ENCODE measurements at regions of chr1 and their contacts with region 1.

Region 1: GRCh38 chr1:107782217-107782845 is 182.6 kb downstream of the VAV3 start:
- DNase-seq: peak in 1 of 2 donors; percentile 23
- H3K4me3 ChIP-seq: no peak overlapping the region
- H3K27ac ChIP-seq: peak overlapping the region in 2 of 3 donors; percentile 10 to 47
- H3K4me1 ChIP-seq: peaks cover 11 to 25% of the 10 kb centered on the region in 2 donors
- H3K27me3 ChIP-seq: no peaks in the 10 kb centered on the region
- CTCF ChIP-seq: peak; percentile 43 to 86 (median 72)
- POLR2A ChIP-seq: no peak

Region 2: DNA sequence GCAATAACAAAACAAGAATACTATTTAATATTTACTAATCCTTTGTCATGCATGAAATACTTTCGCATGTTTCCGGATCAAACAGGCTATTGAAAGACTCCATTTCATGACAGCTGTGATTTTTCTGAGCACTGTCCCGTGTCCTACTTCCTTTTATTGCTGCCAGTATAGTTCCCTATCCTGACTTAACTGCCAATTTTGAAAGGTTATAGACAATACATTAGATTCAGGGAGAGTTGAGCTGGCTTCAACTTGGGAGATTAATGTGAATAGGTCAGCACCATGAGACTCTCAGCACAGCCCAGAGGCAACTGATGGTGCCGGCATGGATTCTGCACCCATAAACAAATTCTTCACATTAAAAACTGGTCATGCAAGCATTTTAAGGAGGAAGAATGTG is 43.1 kb before region 1 on chr1:
- intact Hi-C with region 1: no loop called
- DNase-seq: no peak
- H3K4me3 ChIP-seq: no peak overlapping the region
- H3K27ac ChIP-seq: no peak overlapping the region
- H3K4me1 ChIP-seq: no peaks in the 10 kb centered on the region
- H3K27me3 ChIP-seq: no peaks in the 10 kb centered on the region
- CTCF ChIP-seq: no peak
- POLR2A ChIP-seq: no peak

Region 3: DNA sequence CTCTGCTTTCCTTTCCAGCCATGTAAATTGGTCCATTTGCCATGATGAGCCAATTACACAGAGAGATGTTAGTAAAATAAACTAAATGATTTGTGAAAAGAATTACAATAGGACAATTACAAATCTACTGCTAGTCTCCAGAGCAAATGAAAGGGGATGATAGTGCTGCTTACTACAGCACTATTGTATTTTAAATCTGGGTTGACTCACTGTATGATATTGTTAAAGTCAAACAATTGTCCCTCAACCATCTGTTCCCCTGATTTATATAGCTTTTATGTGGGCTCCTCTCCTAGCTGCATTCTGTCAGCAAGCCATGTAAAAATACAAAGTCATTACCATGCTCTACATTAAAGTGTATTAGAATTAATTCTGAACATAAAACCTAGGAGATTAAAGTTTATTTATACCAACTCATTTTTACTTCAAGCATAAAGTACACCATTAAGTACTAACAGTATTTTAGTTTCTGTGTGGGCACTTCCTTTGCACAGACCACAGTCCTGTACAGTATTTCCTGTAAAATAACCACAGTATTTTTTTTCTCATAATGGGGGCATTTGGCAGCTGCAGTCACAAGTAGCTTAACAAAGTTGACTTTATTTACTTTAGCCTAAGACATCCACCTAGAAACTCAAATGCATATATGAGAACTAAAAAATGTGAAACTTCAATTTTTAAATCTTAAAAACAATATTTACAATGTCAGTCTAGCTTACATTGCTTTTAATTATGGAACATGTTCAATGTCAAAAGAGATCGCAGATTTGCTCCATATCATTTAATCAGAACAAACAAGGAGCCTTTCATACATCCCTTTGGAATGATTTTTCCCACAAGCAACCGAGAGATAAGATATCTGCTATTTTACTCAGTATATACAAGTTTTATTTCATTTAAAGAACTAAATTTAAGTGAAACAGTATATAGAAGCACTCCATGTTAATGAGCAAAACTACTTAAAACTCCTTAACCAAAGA is 47.0 kb after region 1 on chr1:
- intact Hi-C with region 1: loop called (anchors 10 kb)
- DNase-seq: no peak
- H3K4me3 ChIP-seq: no peak overlapping the region
- H3K27ac ChIP-seq: peak overlapping the region in 1 of 3 donors; percentile 15
- H3K4me1 ChIP-seq: peaks cover 14 to 26% of the 10 kb centered on the region in 2 donors
- H3K27me3 ChIP-seq: no peaks in the 10 kb centered on the region
- CTCF ChIP-seq: no peak
- POLR2A ChIP-seq: no peak

Region 4: GRCh38 chr1:107976836-107977235 is 194.5 kb after region 1 on chr1:
- intact Hi-C with region 1: no loop called
- DNase-seq: no peak
- H3K4me3 ChIP-seq: no peak overlapping the region
- H3K27ac ChIP-seq: no peak overlapping the region
- H3K4me1 ChIP-seq: no peaks in the 10 kb centered on the region
- H3K27me3 ChIP-seq: no peaks in the 10 kb centered on the region
- CTCF ChIP-seq: no peak
- POLR2A ChIP-seq: no peak

Region 5: DNA sequence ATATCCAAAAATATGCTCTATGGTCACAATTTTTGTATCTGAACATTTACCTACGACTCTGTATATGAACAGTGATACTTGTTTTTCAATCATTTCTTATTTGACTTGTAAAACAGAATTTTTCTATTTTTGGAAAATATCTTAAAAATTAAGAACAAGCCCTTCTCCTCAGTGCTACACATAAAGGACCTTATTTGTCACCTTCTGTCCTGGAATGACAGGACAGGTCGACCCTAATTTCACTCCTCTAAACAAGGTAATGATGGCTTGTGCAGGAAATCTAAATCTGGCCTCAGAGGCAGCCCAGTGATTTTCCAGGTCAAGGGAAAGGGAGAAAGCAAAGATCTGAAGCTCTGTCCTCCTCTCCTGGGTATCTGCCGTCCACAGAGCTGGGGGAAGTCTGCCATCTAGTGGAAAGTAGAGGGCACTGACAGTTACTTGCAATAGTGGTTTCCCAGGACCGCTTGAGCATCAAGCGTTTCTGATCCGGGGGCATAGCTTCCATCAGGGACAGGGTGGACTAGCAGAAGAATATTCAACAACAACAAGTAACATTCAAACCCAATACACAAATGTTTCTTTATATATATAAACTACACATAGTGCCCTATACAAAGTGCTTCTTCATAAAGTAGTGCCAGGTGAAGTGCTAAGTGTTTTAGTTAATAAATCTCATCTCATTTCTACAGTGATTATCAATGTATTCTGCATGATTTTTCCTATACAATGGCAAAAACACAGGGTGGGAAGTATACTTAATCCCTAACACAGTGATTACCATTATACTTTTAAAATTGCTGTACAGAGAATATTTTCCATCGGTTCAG is 343.2 kb after region 1 on chr1:
- intact Hi-C with region 1: loop called (anchors 2 kb)
- DNase-seq: peak; percentile 63 to 75
- H3K4me3 ChIP-seq: no peak overlapping the region
- H3K27ac ChIP-seq: no peak overlapping the region
- H3K4me1 ChIP-seq: no peaks in the 10 kb centered on the region
- H3K27me3 ChIP-seq: no peaks in the 10 kb centered on the region
- CTCF ChIP-seq: peak; percentile 70 to 97 (median 91)
- POLR2A ChIP-seq: no peak